Activated CD4-positive, alpha-beta memory T cell treated with anti-CD3 and anti-CD28 coated beads for 36 hours (primary cell): ENCODE measurements at regions of chr20 and their contacts with region 1.

Region 1: DNA sequence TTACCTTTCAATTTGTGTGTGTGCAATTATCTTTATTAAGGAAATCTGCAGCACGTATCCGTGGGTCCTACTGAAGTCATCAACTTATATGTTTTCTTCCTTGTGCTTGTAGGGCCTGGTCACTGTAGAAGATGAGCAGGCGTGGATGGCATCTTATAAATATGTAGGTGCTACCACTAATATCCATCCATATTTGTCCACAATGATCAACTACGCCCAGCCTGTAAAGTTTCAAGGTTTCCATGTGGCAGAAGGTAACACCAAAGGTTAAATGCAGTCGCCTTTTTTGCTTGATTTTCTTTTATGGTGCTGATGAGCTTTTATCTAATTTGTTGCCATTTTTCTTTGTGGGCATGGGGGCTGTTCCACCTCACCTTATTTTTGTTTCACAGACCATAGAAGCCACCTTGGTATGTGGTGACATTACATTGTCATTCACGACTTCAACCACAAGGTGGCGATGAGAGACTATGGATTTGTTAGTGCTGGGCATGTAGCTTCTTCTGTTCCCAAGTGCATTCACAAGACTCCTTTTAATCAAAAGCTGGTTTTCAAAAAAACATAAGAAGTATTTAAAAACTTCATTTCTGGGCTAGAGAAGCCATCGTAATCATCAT is 106.5 kb upstream of the LAMP5 start:
- DNase-seq: peak; percentile 56
- H3K4me3 Mint-ChIP-seq: no peak overlapping the region
- H3K27ac Mint-ChIP-seq: no peak overlapping the region
- H3K4me1 Mint-ChIP-seq: no peaks in the 10 kb centered on the region
- H3K27me3 Mint-ChIP-seq: no peaks in the 10 kb centered on the region

Region 2: DNA sequence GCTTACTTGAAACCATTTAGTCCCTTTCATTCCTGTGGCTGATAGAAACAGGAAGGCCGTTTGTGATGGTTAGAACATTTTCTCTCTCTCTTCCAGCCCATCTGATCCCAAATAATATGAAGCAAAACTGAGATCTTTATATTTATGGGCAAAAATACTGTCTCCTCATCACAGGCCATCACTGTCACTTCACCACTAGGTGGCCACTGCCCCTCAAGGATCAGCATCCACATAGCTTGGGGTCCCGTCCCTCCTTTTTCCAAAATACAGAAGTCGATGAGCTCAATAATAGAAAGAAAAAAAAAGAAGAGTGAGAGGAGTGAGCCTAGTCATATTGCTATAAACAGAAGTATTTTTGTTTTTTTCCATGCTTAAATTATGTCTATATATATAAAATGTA is 60.1 kb after region 1 on chr20:
- CTCF ChIA-PET with region 1: no interaction called
- POLR2A ChIA-PET with region 1: no interaction called
- intact Hi-C with region 1: no loop called
- DNase-seq: no peak
- H3K4me3 Mint-ChIP-seq: no peak overlapping the region
- H3K27ac Mint-ChIP-seq: no peak overlapping the region
- H3K4me1 Mint-ChIP-seq: no peaks in the 10 kb centered on the region
- H3K27me3 Mint-ChIP-seq: no peaks in the 10 kb centered on the region

Region 3: GRCh38 chr20:9590189-9590588 is 182.3 kb after region 1 on chr20:
- CTCF ChIA-PET with region 1: no interaction called
- POLR2A ChIA-PET with region 1: no interaction called
- intact Hi-C with region 1: no loop called
- DNase-seq: no peak
- H3K4me3 Mint-ChIP-seq: no peak overlapping the region
- H3K27ac Mint-ChIP-seq: no peak overlapping the region
- H3K4me1 Mint-ChIP-seq: no peaks in the 10 kb centered on the region
- H3K27me3 Mint-ChIP-seq: peaks cover 4% of the 10 kb centered on the region

Region 4: DNA sequence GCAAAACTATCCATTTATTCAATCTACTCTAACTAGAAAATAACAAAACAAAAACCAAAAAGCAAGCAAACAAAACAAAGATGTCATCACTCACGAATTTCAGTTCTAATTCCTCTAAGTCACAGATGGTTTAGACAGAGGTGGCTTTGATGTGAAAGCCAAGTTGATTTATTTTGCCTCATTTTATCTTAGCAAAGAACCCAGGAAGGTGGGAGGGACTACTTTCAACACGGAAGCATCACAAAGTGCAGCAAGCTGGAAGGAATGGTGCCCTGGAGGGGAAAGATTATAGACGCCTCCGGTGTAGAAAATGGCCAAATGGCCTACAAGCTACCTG is 194.9 kb after region 1 on chr20:
- CTCF ChIA-PET with region 1: interaction called, 124 read pairs
- POLR2A ChIA-PET with region 1: no interaction called
- intact Hi-C with region 1: no loop called
- DNase-seq: no peak
- H3K4me3 Mint-ChIP-seq: no peak overlapping the region
- H3K27ac Mint-ChIP-seq: no peak overlapping the region
- H3K4me1 Mint-ChIP-seq: no peaks in the 10 kb centered on the region
- H3K27me3 Mint-ChIP-seq: peaks cover 4% of the 10 kb centered on the region

Region 5: GRCh38 chr20:9609887-9610502 is 202.1 kb after region 1 on chr20:
- CTCF ChIA-PET with region 1: interaction called, 124 read pairs
- POLR2A ChIA-PET with region 1: no interaction called
- intact Hi-C with region 1: loop called (anchors 1 kb)
- DNase-seq: peak; percentile 55
- H3K4me3 Mint-ChIP-seq: no peak overlapping the region
- H3K27ac Mint-ChIP-seq: no peak overlapping the region
- H3K4me1 Mint-ChIP-seq: no peaks in the 10 kb centered on the region
- H3K27me3 Mint-ChIP-seq: no peaks in the 10 kb centered on the region

Region 6: DNA sequence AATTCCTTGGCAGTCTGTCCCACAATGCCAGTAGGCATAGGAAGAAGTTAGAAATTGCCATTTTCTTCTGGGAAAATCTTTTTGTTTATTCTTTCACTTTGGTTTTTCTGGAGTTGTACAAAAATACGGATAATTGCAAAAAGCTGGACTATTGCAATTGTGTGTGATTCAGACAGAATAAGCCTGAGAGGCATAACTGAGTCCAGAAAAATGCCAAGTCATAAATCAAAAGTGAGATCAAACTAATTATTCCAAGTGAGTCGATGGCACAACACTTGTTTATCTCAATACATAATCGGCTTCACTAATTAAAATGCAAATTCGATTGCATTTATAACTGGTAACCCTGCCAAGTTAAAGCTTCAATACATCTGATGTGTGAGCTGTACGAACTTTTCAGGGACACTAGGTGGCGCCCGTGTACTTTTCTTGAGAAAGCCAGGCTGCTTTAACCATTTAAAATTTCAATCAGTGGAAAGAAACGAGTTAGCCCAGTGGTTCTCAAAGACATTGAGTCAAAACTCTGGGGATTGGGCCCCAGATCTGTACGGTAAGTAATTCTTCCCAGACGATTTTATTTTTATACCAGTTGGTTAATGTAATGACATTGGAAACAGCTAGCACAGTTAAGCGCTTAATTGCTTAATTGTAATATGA is 209.0 kb after region 1 on chr20:
- CTCF ChIA-PET with region 1: interaction called, 124 read pairs
- POLR2A ChIA-PET with region 1: no interaction called
- intact Hi-C with region 1: no loop called
- DNase-seq: peak; percentile 60
- H3K4me3 Mint-ChIP-seq: no peak overlapping the region
- H3K27ac Mint-ChIP-seq: no peak overlapping the region
- H3K4me1 Mint-ChIP-seq: no peaks in the 10 kb centered on the region
- H3K27me3 Mint-ChIP-seq: peaks cover 3% of the 10 kb centered on the region

Region 7: DNA sequence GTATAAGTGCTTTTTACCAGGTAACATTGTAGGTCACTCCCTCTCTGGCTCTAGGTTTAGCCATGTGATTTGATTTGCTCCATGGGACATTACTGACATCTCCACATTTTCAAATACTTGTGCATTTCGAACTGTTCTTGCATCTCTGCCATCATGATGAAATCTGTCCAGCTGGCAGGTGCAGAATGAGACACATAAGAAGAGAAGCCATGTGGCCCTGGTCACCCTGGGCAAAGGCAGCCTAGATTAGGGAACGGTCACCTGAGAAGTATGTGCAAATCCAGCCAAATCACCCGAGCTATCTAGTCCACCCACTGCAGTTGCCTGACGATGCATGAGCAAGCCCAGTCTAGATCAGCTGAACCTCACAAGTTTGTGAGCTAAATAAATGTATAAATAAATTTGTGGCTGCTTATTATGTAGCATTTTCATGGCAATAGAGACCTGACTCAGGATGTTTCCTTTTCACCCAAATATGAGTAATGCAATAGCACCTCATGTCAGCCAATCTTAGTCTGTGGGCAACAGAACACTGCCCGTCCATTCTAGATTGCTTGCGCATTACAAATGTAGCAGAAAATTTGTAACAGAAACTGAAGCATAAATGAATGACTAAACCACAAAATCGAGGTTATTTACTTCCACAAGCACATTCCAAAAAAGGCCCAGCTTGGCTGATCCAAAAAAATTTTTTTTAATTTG is 315.7 kb after region 1 on chr20:
- CTCF ChIA-PET with region 1: no interaction called
- POLR2A ChIA-PET with region 1: no interaction called
- intact Hi-C with region 1: no loop called
- DNase-seq: no peak
- H3K4me3 Mint-ChIP-seq: no peak overlapping the region
- H3K27ac Mint-ChIP-seq: no peak overlapping the region
- H3K4me1 Mint-ChIP-seq: no peaks in the 10 kb centered on the region
- H3K27me3 Mint-ChIP-seq: no peaks in the 10 kb centered on the region

Region 8: DNA sequence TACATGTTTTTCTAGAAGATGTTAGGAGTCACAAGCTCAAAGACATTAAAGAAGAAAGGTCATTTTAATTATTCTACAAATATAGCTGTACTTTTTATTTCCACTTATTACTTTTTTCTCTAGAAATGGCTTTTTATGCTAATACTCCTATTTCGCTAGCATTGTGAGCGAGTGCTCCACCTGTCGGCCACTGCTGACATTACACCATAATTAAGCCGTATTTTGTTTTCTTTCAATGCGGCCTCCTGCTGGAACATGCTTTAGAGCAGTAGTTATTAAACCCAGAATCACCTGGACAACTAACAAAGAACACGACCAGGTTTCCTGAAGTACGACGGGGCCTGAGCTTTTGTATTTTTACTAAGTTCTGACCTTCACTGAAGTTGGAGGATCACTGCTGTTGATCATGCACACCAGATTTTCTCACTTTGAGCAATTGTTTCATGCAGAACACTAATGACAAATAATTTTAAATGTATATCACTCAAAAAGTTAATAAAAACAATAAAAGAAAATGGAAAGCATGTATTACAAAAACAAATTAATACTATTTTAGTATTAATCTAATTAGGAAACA is 505.0 kb after region 1 on chr20:
- CTCF ChIA-PET with region 1: no interaction called
- POLR2A ChIA-PET with region 1: no interaction called
- intact Hi-C with region 1: loop called (anchors 5 kb)
- DNase-seq: peak; percentile 28
- H3K4me3 Mint-ChIP-seq: no peak overlapping the region
- H3K27ac Mint-ChIP-seq: no peak overlapping the region
- H3K4me1 Mint-ChIP-seq: peaks cover 2% of the 10 kb centered on the region
- H3K27me3 Mint-ChIP-seq: peaks cover 14% of the 10 kb centered on the region